ENCODE measurements at regions of chr14 and their contacts with region 1.

Region 1: GRCh38 chr14:20697273-20698017 is 8.9 kb downstream of the ANG start:
- DNase-seq: peak; percentile 41 to 68 (median 44)
- H3K4me3 ChIP-seq: no peak overlapping the region
- H3K4me3 Mint-ChIP-seq: no peak overlapping the region
- H3K27ac ChIP-seq: no peak overlapping the region
- H3K27ac Mint-ChIP-seq: no peak overlapping the region
- H3K4me1 ChIP-seq: no peaks in the 10 kb centered on the region
- H3K4me1 Mint-ChIP-seq: no peaks in the 10 kb centered on the region
- H3K27me3 ChIP-seq: no peaks in the 10 kb centered on the region
- H3K27me3 Mint-ChIP-seq: peaks cover 5 to 9% of the 10 kb centered on the region in 2 donors

Region 2: GRCh38 chr14:20446889-20447288 is 250.6 kb before region 1 on chr14:
- CTCF ChIA-PET with region 1: no interaction called
- POLR2A ChIA-PET with region 1: no interaction called
- DNase-seq: no peak
- H3K4me3 ChIP-seq: no peak overlapping the region
- H3K4me3 Mint-ChIP-seq: no peak overlapping the region
- H3K27ac ChIP-seq: no peak overlapping the region
- H3K27ac Mint-ChIP-seq: no peak overlapping the region
- H3K4me1 ChIP-seq: peaks cover 2% of the 10 kb centered on the region
- H3K4me1 Mint-ChIP-seq: peaks cover under 1 to 5% (median 3%) of the 10 kb centered on the region in 3 donors
- H3K27me3 ChIP-seq: no peaks in the 10 kb centered on the region
- H3K27me3 Mint-ChIP-seq: no peaks in the 10 kb centered on the region

Region 3: DNA sequence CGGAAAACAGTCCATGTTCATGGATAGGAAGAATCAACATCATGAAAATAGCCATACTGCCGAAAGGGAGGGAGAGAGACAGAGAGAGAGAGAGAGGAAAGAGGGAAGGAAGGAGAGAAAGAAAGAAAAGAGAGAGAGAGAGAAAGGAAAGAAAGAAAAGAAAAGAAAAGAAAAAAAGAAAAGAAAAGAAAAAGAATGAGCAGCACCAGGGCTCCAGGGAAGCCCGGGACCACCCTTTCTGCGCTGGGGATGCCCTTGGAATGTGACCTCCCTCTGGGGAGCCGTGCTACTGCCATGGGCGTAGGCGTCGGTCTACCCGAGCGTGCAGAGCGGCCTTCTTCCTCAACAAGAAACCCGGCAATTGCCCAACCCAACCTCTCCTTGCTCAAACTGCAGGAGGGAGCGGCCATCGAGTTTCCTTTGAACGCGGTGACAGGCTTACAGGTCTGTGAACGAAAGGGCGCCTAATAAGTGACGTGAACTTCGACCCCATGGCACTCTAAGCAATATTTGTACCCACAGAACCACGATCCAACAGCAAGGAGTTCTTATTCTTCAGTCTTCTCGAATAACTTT is 72.9 kb before region 1 on chr14:
- CTCF ChIA-PET with region 1: no interaction called
- POLR2A ChIA-PET with region 1: no interaction called
- DNase-seq: peak in 4 of 5 donors; percentile 32 to 71 (median 44)
- H3K4me3 ChIP-seq: peak overlapping the region; percentile 59
- H3K4me3 Mint-ChIP-seq: peak overlapping the region; percentile 82 to 93 (median 86)
- H3K27ac ChIP-seq: peak overlapping the region; percentile 17
- H3K27ac Mint-ChIP-seq: peak overlapping the region in 7 of 8 donors; percentile 73 to 97 (median 84)
- H3K4me1 ChIP-seq: peaks cover 42% of the 10 kb centered on the region
- H3K4me1 Mint-ChIP-seq: peaks cover 60 to 71% (median 67%) of the 10 kb centered on the region in 3 donors
- H3K27me3 ChIP-seq: no peaks in the 10 kb centered on the region
- H3K27me3 Mint-ChIP-seq: peaks cover 13 to 18% of the 10 kb centered on the region in 2 donors

Region 4: DNA sequence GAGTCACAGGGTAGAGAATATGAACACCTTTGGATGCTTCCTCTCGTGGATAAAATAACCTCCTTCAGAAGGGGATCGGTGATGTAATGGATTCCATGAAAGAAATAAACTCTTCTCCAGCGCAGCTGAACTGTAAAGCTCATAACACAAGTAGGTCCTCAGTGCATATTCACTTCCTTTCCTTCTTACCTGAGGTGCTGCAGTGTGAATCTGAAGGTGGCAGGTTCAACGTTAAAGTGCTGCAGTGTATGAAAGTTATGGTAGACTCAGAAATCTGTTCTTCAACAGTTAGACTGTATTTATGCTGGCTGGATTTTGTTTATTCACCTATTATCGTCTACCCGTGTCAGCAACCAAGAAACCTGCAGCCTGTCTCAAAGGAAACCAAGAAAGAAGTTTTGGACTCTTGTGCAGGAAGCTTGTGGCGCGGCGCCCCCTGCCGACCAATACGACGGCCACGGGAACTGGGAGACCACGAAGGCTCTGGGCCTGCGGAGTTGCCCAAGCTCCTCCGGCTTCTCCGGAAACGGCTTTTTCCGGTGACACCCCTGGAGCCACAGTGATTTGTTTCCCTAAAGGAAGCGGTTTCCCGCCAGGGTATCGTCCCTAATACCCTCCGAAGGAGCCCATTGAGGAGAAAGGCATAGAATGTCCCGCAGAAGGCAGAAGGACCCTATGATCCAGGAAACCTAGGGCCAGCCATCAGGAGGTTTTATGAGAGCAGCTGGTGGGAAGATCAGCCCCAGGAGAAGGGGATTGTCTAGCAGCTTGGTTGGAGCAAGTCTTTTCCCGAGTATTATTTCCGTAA is 176.1 kb after region 1 on chr14:
- CTCF ChIA-PET with region 1: interaction called, 10 read pairs
- POLR2A ChIA-PET with region 1: no interaction called
- DNase-seq: peak; percentile 56 to 79 (median 62)
- H3K4me3 ChIP-seq: no peak overlapping the region
- H3K4me3 Mint-ChIP-seq: peak overlapping the region in 4 of 7 donors; percentile 33 to 55 (median 50)
- H3K27ac ChIP-seq: no peak overlapping the region
- H3K27ac Mint-ChIP-seq: peak overlapping the region in 1 of 8 donors; percentile 38
- H3K4me1 ChIP-seq: peaks cover 10% of the 10 kb centered on the region
- H3K4me1 Mint-ChIP-seq: peaks cover 8 to 12% (median 11%) of the 10 kb centered on the region in 3 donors
- H3K27me3 ChIP-seq: no peaks in the 10 kb centered on the region
- H3K27me3 Mint-ChIP-seq: peaks cover 3 to 26% of the 10 kb centered on the region in 2 donors

Measured in CD8-positive, alpha-beta memory T cell (primary cell).